ENCODE measurements at regions of chr9 and their contacts with region 1.

Region 1: GRCh38 chr9:125484350-125485282 is 222.4 kb downstream of the MAPKAP1 start:
- DNase-seq: no peak
- ATAC-seq: peak; percentile 63 to 68
- H3K4me3 ChIP-seq: no peak overlapping the region
- H3K27ac ChIP-seq: peak overlapping the region; percentile 88
- H3K4me1 ChIP-seq: no peaks in the 10 kb centered on the region
- H3K27me3 ChIP-seq: no peaks in the 10 kb centered on the region

Region 2: GRCh38 chr9:124810513-124811355 is 673.9 kb before region 1 on chr9:
- intact Hi-C with region 1: no loop called
- DNase-seq: peak in 1 of 3 donors; percentile 62
- ATAC-seq: peak; percentile 44 to 55
- H3K4me3 ChIP-seq: no peak overlapping the region
- H3K27ac ChIP-seq: peak overlapping the region; percentile 46
- H3K4me1 ChIP-seq: no peaks in the 10 kb centered on the region
- H3K27me3 ChIP-seq: no peaks in the 10 kb centered on the region

Region 3: DNA sequence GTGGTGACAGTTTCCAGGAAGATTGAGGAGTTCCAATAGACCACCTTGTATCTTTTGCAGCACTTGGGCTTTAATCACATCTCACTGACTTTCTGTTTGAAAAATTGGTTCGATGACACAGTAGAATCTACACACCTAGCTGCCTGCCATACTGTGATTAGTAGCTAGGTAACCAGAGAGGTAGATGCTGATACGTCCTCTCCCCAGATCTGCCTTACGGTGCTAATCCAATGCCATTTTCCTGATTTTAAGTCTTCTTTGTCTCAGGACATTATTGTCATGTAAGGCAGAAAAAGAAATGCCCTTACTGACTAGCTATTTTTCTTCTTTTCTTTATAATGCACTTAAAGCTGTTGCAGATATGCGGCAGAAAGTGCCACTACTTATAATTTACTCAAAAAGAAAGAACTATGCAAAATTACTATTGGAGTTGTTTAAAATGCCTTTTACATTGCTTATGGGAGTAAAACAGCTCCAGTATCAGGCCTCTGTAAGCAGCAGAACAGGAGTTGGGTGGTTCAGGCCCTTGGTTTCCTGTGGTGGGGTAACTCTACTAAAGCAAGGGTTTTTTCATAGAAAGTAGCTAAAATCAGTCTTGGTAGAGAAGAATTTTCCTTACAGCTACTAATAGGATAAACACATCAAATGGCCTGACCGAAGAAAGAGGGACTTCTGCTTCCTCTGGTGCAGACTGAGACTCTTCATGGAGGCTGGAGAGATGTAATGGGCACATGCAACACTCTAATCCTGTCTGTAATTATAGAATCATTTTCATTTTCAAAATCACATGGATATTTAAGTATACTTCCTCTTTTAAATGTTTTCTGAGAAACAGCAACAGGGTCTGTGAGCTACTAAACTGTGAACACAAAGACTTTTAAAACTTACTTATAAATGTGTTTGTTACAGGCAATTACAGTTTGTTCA is 45.2 kb after region 1 on chr9:
- intact Hi-C with region 1: no loop called
- DNase-seq: no peak
- ATAC-seq: no peak
- H3K4me3 ChIP-seq: no peak overlapping the region
- H3K27ac ChIP-seq: no peak overlapping the region
- H3K4me1 ChIP-seq: peaks cover 3% of the 10 kb centered on the region
- H3K27me3 ChIP-seq: no peaks in the 10 kb centered on the region

Region 4: GRCh38 chr9:125544988-125545651 is 60.5 kb after region 1 on chr9:
- intact Hi-C with region 1: loop called in 1 of 4 experiments (anchors 10 kb)
- DNase-seq: peak in 2 of 3 donors; percentile 37 to 61
- ATAC-seq: peak; percentile 62 to 74
- H3K4me3 ChIP-seq: no peak overlapping the region
- H3K27ac ChIP-seq: peak overlapping the region; percentile 47
- H3K4me1 ChIP-seq: peaks cover 11% of the 10 kb centered on the region
- H3K27me3 ChIP-seq: no peaks in the 10 kb centered on the region

Measured in right cardiac atrium (tissue), 5 donors.